ENCODE measurements at regions of chr3 and their contacts with region 1.

Region 1: GRCh38 chr3:147383617-147384016 is 22.7 kb downstream of the ZIC4 start:
- DNase-seq: no peak
- ATAC-seq: no peak

Region 2: GRCh38 chr3:147318900-147319299 is 64.7 kb before region 1 on chr3:
- intact Hi-C with region 1: no loop called
- DNase-seq: no peak
- ATAC-seq: no peak

Region 3: DNA sequence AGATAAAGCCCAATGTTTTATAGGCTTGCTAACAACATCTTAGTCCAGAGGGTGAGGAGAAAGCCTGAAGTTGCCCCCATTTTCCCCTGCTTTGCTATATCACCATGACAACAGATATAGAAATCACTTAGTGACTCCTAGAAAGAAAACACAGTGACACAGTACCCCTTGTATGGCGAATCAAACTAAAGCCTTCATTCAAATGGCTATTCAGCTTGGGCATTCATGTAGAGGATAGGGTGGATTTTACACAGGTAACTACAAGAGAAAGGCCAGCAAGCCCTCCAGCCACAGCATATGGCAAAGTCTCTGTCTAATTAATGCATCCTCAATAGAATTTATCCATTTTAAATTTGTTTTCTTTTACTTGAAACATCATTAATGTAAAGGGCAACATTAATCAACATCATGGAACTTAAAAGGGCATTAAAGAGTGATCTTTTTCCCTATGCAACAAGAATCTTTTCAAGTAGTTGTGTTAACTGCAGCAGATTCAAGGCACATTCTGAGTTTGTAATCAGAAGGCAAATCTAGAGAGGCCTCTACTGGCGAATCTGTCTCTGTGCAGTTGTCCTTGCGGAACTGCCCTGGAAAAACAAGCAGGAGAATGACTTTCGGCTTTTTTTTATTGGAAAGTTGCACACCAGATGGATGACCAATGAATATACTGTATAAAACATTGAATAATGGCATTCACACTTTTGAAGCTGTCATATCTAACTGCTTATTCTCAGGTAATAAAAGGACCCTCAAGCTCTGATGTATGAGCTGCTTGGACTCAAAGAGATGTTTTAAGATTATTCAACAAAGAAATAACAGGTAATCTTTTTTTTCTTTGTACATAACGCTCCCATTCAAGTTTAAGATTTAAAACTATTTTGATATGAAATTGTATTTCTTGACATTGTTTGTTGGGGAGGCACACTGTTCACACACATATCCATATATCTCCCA is 692.4 kb after region 1 on chr3:
- intact Hi-C with region 1: loop called in 1 of 2 experiments (anchors 10 kb)
- DNase-seq: no peak
- ATAC-seq: no peak